ENCODE measurements at regions of chrX and their contacts with region 1.

Region 1: GRCh38 chrX:24506055-24506454 is 41.0 kb downstream of the PDK3 start:
- DNase-seq: no peak
- H3K4me3 Mint-ChIP-seq: no peak overlapping the region
- H3K27ac Mint-ChIP-seq: peak overlapping the region; percentile 87
- H3K4me1 Mint-ChIP-seq: peaks cover 13% of the 10 kb centered on the region
- H3K27me3 Mint-ChIP-seq: no peaks in the 10 kb centered on the region

Region 2: GRCh38 chrX:24259544-24260240 is 246.4 kb before region 1 on chrX:
- intact Hi-C with region 1: loop called (anchors 10 kb)
- DNase-seq: peak; percentile 74
- H3K4me3 Mint-ChIP-seq: no peak overlapping the region
- H3K27ac Mint-ChIP-seq: no peak overlapping the region
- H3K4me1 Mint-ChIP-seq: peaks cover 19% of the 10 kb centered on the region
- H3K27me3 Mint-ChIP-seq: no peaks in the 10 kb centered on the region

Region 3: GRCh38 chrX:24471808-24472207 is 34.2 kb before region 1 on chrX:
- intact Hi-C with region 1: loop called (anchors 5 kb)
- DNase-seq: no peak
- H3K4me3 Mint-ChIP-seq: peak overlapping the region; percentile 16
- H3K27ac Mint-ChIP-seq: no peak overlapping the region
- H3K4me1 Mint-ChIP-seq: peaks cover 40% of the 10 kb centered on the region
- H3K27me3 Mint-ChIP-seq: no peaks in the 10 kb centered on the region

Region 4: GRCh38 chrX:24494647-24495075 is 11.4 kb before region 1 on chrX:
- intact Hi-C with region 1: no loop called
- DNase-seq: no peak
- H3K4me3 Mint-ChIP-seq: peak overlapping the region; percentile 28
- H3K27ac Mint-ChIP-seq: peak overlapping the region; percentile 70
- H3K4me1 Mint-ChIP-seq: peaks cover 26% of the 10 kb centered on the region
- H3K27me3 Mint-ChIP-seq: no peaks in the 10 kb centered on the region

Region 5: DNA sequence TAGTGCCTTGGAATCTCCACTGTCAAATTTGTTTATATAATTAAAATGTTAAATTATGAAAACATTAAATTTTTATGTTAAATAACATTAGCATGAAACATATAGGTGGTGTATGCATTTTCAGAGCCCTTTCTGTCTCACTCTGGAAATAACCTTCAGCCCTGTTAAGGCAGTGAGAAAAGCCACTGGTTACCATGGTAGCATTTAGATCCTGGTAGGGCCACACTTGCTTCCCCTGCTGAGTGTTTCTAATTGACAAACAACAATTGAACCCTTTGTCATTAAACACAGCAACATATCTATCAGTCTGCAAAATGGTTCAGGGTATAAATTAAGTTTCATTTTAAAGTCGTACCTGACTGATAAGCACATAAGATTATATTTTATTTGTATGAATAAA is 22.6 kb after region 1 on chrX:
- intact Hi-C with region 1: no loop called
- DNase-seq: no peak
- H3K4me3 Mint-ChIP-seq: no peak overlapping the region
- H3K27ac Mint-ChIP-seq: no peak overlapping the region
- H3K4me1 Mint-ChIP-seq: no peaks in the 10 kb centered on the region
- H3K27me3 Mint-ChIP-seq: no peaks in the 10 kb centered on the region

Measured in activated CD4-positive, alpha-beta T cell treated with anti-CD3 and anti-CD28 coated beads, Interleukin-2, amount 10 ng/mL, durations not matched to agents 24 days and 14 days (primary cell).